ENCODE measurements at regions of chr12 and their contacts with region 1.

Region 1: GRCh38 chr12:118372541-118373495 is at the start of gene TAOK3:
- H3K4me3 Mint-ChIP-seq: peak within 1 kb of the TSS; percentile 100
- H3K27ac Mint-ChIP-seq: peak within 1 kb of the TSS; percentile 98
- H3K4me1 Mint-ChIP-seq: peaks cover 47% of the 10 kb centered on the region
- H3K27me3 Mint-ChIP-seq: no peaks in the 10 kb centered on the region

Region 2: GRCh38 chr12:118120579-118121363 is 252.0 kb before region 1 on chr12:
- intact Hi-C with region 1: loop called (anchors 2 kb)
- H3K4me3 Mint-ChIP-seq: no peak overlapping the region
- H3K27ac Mint-ChIP-seq: peak overlapping the region; percentile 41
- H3K4me1 Mint-ChIP-seq: peaks cover 7% of the 10 kb centered on the region
- H3K27me3 Mint-ChIP-seq: no peaks in the 10 kb centered on the region

Region 3: GRCh38 chr12:118237052-118237665 is 135.7 kb before region 1 on chr12:
- intact Hi-C with region 1: loop called (anchors 5 kb)
- H3K4me3 Mint-ChIP-seq: peak overlapping the region; percentile 17
- H3K27ac Mint-ChIP-seq: peak overlapping the region; percentile 81
- H3K4me1 Mint-ChIP-seq: peaks cover 30% of the 10 kb centered on the region
- H3K27me3 Mint-ChIP-seq: no peaks in the 10 kb centered on the region

Region 4: GRCh38 chr12:118326991-118327390 is 45.8 kb before region 1 on chr12:
- intact Hi-C with region 1: loop called (anchors 5 kb)
- H3K4me3 Mint-ChIP-seq: no peak overlapping the region
- H3K27ac Mint-ChIP-seq: no peak overlapping the region
- H3K4me1 Mint-ChIP-seq: peaks cover 34% of the 10 kb centered on the region
- H3K27me3 Mint-ChIP-seq: no peaks in the 10 kb centered on the region

Region 5: GRCh38 chr12:118970856-118971255 is 598.0 kb after region 1 on chr12:
- intact Hi-C with region 1: no loop called
- H3K4me3 Mint-ChIP-seq: no peak overlapping the region
- H3K27ac Mint-ChIP-seq: no peak overlapping the region
- H3K4me1 Mint-ChIP-seq: no peaks in the 10 kb centered on the region
- H3K27me3 Mint-ChIP-seq: no peaks in the 10 kb centered on the region